SK-N-SH (cell line): ENCODE measurements at regions of chr7 and their contacts with region 1.

Region 1: DNA sequence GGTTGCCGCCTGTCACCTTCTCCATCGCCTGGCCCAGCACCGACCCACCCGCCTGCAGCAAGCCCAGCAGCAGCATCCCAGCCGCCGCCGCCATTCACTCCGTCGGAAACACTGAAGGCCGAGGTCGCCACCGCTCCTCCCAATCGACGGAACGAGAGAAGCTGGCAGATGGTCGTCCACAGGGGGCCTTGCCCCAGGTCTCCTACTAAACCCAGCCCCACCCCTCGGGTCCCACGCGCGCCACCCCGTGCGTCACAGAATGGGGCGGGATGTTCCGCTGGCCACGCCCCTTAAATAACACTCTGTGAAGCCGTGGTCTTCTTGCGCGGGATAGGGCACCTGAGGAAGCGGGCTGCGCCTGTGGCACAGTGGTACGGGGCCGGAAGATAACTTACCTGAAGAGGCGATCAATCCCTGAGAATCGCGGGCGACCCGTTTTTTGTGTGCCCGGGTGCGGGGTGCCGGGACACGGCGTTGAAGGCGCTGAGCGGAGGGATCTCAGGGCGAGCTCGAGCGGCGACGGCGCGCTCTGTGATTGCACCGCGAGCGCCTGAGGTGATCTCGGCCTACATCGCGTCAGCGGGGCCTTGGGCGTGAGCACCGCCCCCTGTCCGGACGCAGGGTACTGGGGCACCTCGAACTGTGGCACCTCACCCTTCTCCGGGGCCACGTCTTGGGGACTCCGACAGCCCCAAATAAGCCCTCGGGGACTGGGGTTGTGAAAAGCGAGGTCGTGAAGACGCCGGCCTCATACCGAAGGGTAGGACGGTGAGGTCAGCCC is at the start of gene CYP51A1:
- DNase-seq: peak; percentile 99
- H3K4me3 ChIP-seq: peak within 1 kb of the TSS; percentile 82 to 99
- H3K27ac ChIP-seq: peak within 1 kb of the TSS; percentile 95 to 98
- H3K4me1 ChIP-seq: peaks cover 0 to 16% of the 10 kb centered on the region in 2 experiments; a peak in 3 of 4 replicates
- H3K27me3 ChIP-seq: no peaks in the 10 kb centered on the region
- CTCF ChIP-seq: no peak
- EP300 ChIP-seq: peak in 1 of 2 experiments; percentile 30; a peak in 2 of 4 replicates
- RAD21 ChIP-seq: no peak
- polyA plus RNA-seq, gene CYP51A1: 4.3 and 4.7 TPM in 2 replicates

Region 2: GRCh38 chr7:92108821-92109220 is 25.6 kb before region 1 on chr7:
- CTCF ChIA-PET with region 1: interaction called, 13 read pairs
- POLR2A ChIA-PET with region 1: no interaction called
- DNase-seq: no peak
- H3K4me3 ChIP-seq: no peak overlapping the region
- H3K27ac ChIP-seq: no peak overlapping the region
- H3K4me1 ChIP-seq: no peaks in the 10 kb centered on the region
- H3K27me3 ChIP-seq: no peaks in the 10 kb centered on the region
- CTCF ChIP-seq: no peak
- EP300 ChIP-seq: no peak
- RAD21 ChIP-seq: no peak

Region 3: DNA sequence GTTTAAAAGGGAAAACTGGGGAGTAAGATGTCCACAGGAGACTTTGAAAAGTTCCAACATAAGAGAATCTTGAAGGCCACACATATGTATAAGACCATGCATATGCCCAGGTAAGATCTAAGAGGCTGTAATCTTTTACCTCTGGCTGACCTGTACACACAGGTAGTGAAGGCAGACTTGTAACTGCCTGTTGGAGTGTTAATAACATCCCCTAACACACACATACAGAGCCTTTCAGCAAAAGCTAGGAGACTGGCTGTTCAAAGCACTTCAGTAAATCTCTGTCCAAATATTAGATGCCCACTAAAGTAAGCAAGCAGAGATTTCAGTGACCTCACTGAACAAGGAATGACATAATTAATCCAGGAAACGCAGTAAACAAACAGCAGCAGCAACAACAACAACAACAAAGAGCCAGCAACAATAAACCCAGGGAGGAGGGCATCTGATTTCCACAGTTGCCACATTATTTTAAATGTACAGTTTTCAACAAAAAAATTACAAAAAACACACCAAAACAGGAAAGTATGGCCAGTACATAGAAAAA is 15.2 kb before region 1 on chr7:
- CTCF ChIA-PET with region 1: interaction called, 38 read pairs
- POLR2A ChIA-PET with region 1: no interaction called
- DNase-seq: no peak
- H3K4me3 ChIP-seq: no peak overlapping the region
- H3K27ac ChIP-seq: no peak overlapping the region
- H3K4me1 ChIP-seq: no peaks in the 10 kb centered on the region
- H3K27me3 ChIP-seq: no peaks in the 10 kb centered on the region
- CTCF ChIP-seq: no peak
- EP300 ChIP-seq: no peak
- RAD21 ChIP-seq: no peak

Region 4: GRCh38 chr7:92245487-92246362 is 111.3 kb after region 1 on chr7 and contains the starts of genes ANKIB1 and KRIT1:
- CTCF ChIA-PET with region 1: interaction called, 11 read pairs
- POLR2A ChIA-PET with region 1: interaction called, 12 read pairs
- DNase-seq: peak; percentile 96
- H3K4me3 ChIP-seq: peak within 1 kb of the TSS; percentile 95
- H3K27ac ChIP-seq: peak within 1 kb of the TSS; percentile 86 to 93
- H3K4me1 ChIP-seq: peaks cover 11 to 25% of the 10 kb centered on the region in 2 experiments; a peak in 3 of 4 replicates
- H3K27me3 ChIP-seq: no peaks in the 10 kb centered on the region
- CTCF ChIP-seq: peak; percentile 26
- EP300 ChIP-seq: peak in 1 of 2 experiments; percentile 40; a peak in 1 of 4 replicates
- RAD21 ChIP-seq: no peak
- polyA plus RNA-seq, gene ANKIB1: 24.6 and 32.5 TPM in 2 replicates
- polyA plus RNA-seq, gene KRIT1: 38.5 and 53.3 TPM in 2 replicates